ENCODE measurements at regions of chr5 and their contacts with region 1.

Region 1: GRCh38 chr5:136249678-136250266 is 56.8 kb upstream of the SMIM32 start:
- DNase-seq: peak; percentile 33 to 61
- H3K4me3 ChIP-seq: no peak overlapping the region
- H3K27ac ChIP-seq: no peak overlapping the region
- H3K4me1 ChIP-seq: no peaks in the 10 kb centered on the region
- H3K27me3 ChIP-seq: no peaks in the 10 kb centered on the region; a peak in 2 of 7 replicates
- CTCF ChIP-seq: peak; percentile 86 to 95 (median 92)
- EP300 ChIP-seq: no peak
- POLR2A ChIP-seq: no peak
- RAD21 ChIP-seq: peak; percentile 97 to 98

Region 2: DNA sequence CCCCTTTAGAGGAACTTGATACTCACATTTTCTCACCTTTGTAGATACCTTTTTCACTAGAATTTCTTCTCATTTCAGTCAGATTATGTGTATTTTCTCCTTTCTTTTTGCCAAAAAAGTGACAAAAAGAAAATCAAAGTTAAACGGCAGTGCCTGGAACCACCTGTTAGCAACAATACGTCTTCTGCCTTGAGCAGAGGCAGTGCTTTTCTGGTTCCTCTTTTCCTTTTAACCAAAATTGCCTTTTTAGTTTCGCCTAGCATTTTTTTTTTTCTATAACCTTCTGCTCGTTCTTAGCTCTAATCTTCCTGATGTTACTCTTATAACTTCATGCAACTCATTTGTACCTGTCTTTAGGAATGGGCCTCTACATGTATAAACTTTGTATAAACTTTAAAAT is 82.9 kb before region 1 on chr5:
- CTCF ChIA-PET with region 1: no interaction called
- POLR2A ChIA-PET with region 1: no interaction called
- DNase-seq: no peak
- H3K4me3 ChIP-seq: no peak overlapping the region
- H3K27ac ChIP-seq: no peak overlapping the region
- H3K4me1 ChIP-seq: no peaks in the 10 kb centered on the region
- H3K27me3 ChIP-seq: no peaks in the 10 kb centered on the region
- CTCF ChIP-seq: no peak
- EP300 ChIP-seq: no peak
- POLR2A ChIP-seq: no peak
- RAD21 ChIP-seq: no peak

Region 3: DNA sequence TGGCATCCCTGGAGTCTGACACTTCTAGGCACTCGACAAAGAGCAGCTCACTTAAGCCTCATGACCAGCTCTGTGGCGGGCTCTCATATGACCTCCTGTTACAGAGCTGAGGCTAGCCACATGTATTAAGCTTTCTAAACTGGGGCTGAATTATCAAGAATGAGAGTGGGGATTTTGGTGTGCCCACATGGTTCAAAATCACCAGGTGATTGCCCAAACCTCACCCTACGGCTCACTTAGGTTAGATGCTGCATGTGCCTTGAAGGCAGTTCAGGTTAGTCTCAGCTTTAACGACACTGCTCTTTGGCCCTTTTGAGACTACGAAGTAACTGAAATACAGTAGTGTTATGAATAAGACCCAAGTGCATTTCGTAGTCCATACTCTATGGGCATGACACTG is 17.5 kb before region 1 on chr5:
- CTCF ChIA-PET with region 1: interaction called, 10 read pairs
- POLR2A ChIA-PET with region 1: no interaction called
- DNase-seq: no peak
- H3K4me3 ChIP-seq: no peak overlapping the region
- H3K27ac ChIP-seq: no peak overlapping the region
- H3K4me1 ChIP-seq: peaks cover 0 to 19% (median 7%) of the 10 kb centered on the region in 4 experiments; a peak in 4 of 7 replicates
- H3K27me3 ChIP-seq: no peaks in the 10 kb centered on the region; a peak in 1 of 7 replicates
- CTCF ChIP-seq: no peak
- EP300 ChIP-seq: no peak
- POLR2A ChIP-seq: no peak
- RAD21 ChIP-seq: no peak

Region 4: GRCh38 chr5:136285096-136285855 is 35.5 kb after region 1 on chr5:
- CTCF ChIA-PET with region 1: no interaction called
- POLR2A ChIA-PET with region 1: no interaction called
- DNase-seq: no peak
- H3K4me3 ChIP-seq: no peak overlapping the region
- H3K27ac ChIP-seq: no peak overlapping the region
- H3K4me1 ChIP-seq: no peaks in the 10 kb centered on the region
- H3K27me3 ChIP-seq: no peaks in the 10 kb centered on the region; a peak in 1 of 7 replicates
- CTCF ChIP-seq: no peak
- EP300 ChIP-seq: no peak
- POLR2A ChIP-seq: no peak
- RAD21 ChIP-seq: no peak

Region 5: DNA sequence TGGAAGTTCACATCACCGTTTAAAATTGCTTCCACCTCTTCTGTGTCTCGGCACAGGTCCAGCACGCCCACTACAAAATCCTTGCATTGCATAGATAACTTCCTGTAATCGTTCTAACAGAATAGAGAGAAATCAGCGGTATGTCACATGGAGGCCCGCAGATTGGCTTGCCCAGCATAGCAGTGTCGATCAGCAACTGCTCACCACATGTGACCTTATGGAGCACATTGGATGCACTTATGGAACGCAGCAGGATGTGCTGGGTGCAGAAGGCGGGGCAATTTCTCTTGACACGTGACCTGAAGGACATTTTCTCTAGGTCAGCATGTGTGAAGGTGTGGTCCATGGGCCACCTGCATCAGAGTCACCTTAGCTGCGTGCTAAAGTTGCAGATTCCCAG is 65.9 kb after region 1 on chr5:
- CTCF ChIA-PET with region 1: interaction called, 13 read pairs
- POLR2A ChIA-PET with region 1: no interaction called
- DNase-seq: no peak
- H3K4me3 ChIP-seq: no peak overlapping the region
- H3K27ac ChIP-seq: no peak overlapping the region
- H3K4me1 ChIP-seq: no peaks in the 10 kb centered on the region
- H3K27me3 ChIP-seq: no peaks in the 10 kb centered on the region; a peak in 1 of 7 replicates
- CTCF ChIP-seq: no peak
- EP300 ChIP-seq: no peak
- POLR2A ChIP-seq: no peak
- RAD21 ChIP-seq: no peak

Region 6: DNA sequence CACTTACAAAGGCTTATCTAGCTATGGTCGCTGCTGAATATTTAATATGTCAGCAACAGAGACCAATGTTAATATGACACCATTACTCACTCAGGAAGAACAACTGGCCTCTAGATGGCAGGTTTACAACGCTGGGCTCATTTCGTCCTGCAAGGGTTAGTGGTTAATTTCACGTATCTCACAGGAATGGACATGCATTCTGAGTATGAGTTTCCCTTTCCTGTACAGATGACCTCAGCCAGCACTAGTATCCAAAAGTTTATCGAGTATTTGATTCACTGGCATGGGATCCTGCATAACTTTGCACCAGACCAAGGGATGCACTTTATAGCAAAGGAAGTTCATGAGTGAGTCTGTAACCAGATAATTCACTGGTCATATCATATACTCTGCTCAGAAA is 124.2 kb after region 1 on chr5:
- CTCF ChIA-PET with region 1: interaction called, 10 read pairs
- POLR2A ChIA-PET with region 1: no interaction called
- DNase-seq: no peak
- H3K4me3 ChIP-seq: no peak overlapping the region
- H3K27ac ChIP-seq: no peak overlapping the region
- H3K4me1 ChIP-seq: no peaks in the 10 kb centered on the region
- H3K27me3 ChIP-seq: no peaks in the 10 kb centered on the region
- CTCF ChIP-seq: peak in 2 of 3 experiments; percentile 66 to 77; a peak in 3 of 4 replicates
- EP300 ChIP-seq: no peak
- POLR2A ChIP-seq: no peak
- RAD21 ChIP-seq: peak; percentile 82 to 89

Region 7: DNA sequence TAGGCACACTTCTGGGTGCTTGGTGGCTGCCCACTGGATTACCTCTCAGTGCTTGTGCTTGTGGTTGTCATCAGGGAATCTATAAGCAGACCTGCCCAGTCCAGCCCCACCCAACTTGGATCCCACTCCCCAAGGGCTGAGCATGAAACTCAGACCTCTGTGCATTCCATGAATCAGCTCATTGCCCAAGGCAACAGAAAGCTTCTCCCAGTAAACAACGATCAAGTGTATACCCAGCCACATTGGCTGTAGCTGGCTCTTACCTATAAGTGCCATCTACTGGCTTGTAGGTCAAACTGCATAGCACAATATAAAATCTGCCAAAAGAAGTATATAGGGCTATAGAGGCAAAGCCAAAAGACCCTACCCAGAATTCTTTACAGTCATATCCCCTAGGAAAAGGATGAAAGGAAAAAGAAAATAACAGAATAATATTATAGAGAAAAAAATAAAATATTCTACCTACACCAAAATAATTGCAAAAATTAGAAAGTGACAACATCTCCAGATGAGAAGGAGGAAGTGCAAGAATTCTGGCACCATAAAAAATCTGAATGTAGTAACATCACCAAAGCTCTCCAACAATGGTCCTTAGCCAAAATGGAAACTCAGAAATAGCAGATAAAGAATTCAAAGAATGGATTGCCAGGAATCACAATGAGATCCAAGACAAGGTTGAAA is 436.6 kb after region 1 on chr5:
- CTCF ChIA-PET with region 1: interaction called, 40 read pairs
- POLR2A ChIA-PET with region 1: no interaction called
- DNase-seq: peak in 1 of 2 experiments; percentile 49
- H3K4me3 ChIP-seq: no peak overlapping the region
- H3K27ac ChIP-seq: no peak overlapping the region
- H3K4me1 ChIP-seq: no peaks in the 10 kb centered on the region
- H3K27me3 ChIP-seq: no peaks in the 10 kb centered on the region; a peak in 1 of 7 replicates
- CTCF ChIP-seq: peak in 2 of 3 experiments; percentile 65 to 67; a peak in 3 of 4 replicates
- EP300 ChIP-seq: no peak
- POLR2A ChIP-seq: no peak
- RAD21 ChIP-seq: peak; percentile 80 to 85

Measured in H1 (cell line).